ENCODE measurements at regions of chr7 and their contacts with region 1.

Region 1: DNA sequence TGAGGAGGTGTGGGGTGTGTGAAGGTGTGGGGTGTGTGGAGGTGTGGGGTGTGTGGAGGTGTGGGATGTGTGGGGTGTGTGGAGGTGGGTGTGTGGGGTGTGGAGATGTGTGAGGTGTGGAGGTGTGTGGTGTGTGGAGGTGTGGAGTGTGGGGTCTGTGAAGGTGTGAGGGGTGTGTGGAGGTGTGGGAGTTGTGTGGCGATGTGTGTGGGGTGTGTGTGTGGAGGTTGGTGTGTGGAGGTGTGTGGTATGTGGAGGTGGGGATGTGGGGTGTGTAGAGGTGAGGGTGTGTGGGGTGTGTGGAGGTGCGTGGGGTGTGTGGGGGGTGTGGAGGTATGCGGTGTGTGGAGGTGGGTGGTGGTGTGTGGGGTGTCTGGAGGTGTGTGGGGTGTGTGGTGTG is 34.8 kb downstream of the SPDYE17 start:
- DNase-seq: peak in 1 of 14 experiments; percentile 3
- ATAC-seq: no peak
- H3K4me3 ChIP-seq: no peak overlapping the region
- H3K4me3 Mint-ChIP-seq: no peak overlapping the region
- H3K27ac ChIP-seq: peak overlapping the region in 1 of 2 donors; percentile 26
- H3K27ac Mint-ChIP-seq: no peak overlapping the region
- H3K4me1 ChIP-seq: peaks cover 19% of the 10 kb centered on the region
- H3K4me1 Mint-ChIP-seq: no peaks in the 10 kb centered on the region
- H3K27me3 ChIP-seq: no peaks in the 10 kb centered on the region
- H3K27me3 Mint-ChIP-seq: no peaks in the 10 kb centered on the region
- CTCF ChIP-seq: no peak

Region 2: DNA sequence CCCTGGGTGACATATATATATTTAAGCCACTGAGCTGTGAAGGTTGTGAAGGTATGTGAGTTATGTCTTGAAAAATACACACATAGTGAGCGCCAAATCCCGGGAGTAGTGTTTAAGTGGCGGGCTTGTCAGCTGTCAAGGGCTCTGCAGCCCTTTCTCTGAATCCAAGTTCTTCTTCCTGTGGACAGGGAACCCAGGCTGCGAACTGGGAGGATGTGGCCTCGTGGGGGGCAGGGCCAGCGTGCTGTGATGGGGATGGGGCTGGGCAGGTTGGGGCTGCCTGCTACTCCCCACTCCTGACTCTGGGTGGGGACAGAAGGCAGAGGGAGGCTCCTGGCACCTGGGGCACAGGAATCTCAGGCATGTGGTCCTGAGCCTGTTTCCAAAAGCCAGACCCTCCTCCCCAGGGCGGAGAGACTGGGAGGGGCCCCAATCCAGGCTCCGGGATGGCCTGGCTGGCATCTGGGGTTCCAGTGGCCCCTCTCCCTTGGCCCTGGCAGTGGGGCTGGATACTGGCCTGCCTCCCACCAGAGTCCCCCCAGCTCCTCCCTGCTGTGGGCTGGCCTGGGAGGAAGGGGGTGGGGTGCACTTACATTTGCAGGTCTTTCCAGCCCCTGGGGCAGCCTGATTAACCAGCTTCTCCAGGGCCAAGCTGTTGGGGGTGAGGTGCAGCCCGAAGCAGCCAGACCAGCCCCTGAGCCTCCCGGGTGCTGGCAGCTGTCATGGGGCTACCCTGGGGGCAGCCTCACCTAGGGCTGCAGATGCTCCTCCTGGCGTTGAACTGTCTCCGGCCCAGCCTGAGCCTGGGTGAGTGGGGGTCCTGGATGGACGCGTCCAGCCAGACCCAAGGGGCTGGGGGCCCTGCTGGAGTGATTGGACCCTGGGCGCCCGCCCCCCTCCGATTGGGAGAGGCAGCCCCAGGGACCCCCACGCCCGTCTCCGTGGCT is 487.2 kb before region 1 on chr7 and contains the start of gene UPK3B:
- CTCF ChIA-PET with region 1: no interaction called
- POLR2A ChIA-PET with region 1: no interaction called
- intact Hi-C with region 1: loop called in 1 of 2 experiments (anchors 10 kb)
- DNase-seq: peak in 2 of 14 experiments; percentile 15 to 33
- ATAC-seq: no peak
- H3K4me3 ChIP-seq: no peak within 1 kb of the TSS
- H3K4me3 Mint-ChIP-seq: no peak within 1 kb of the TSS
- H3K27ac ChIP-seq: no peak within 1 kb of the TSS
- H3K27ac Mint-ChIP-seq: no peak within 1 kb of the TSS
- H3K4me1 ChIP-seq: peaks cover 4% of the 10 kb centered on the region
- H3K4me1 Mint-ChIP-seq: no peaks in the 10 kb centered on the region
- H3K27me3 ChIP-seq: no peaks in the 10 kb centered on the region
- H3K27me3 Mint-ChIP-seq: no peaks in the 10 kb centered on the region
- CTCF ChIP-seq: no peak
- total RNA-seq, gene UPK3B: 1.3 to 2.6 TPM

Region 3: DNA sequence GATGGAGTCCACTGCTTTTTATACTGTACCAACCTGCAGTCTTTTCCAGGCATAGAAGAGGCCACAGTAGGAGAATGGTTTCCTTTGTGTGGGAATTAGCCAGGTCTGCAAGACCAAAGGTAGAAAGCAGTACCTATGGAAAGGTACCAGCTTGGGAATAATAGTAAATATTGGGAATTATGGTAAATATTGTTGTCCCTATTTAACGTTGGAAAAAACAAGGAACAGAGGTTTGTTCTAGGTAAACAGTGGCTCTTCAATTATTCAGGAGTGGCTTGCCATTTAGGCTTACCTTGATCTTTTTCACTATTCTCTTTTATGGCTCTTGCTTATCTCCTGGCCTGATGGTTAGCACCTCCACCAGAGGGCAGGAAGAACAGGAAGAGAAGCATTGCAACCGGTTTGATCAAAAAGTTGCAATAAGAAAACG is 462.7 kb after region 1 on chr7:
- CTCF ChIA-PET with region 1: no interaction called
- POLR2A ChIA-PET with region 1: no interaction called
- intact Hi-C with region 1: no loop called
- DNase-seq: peak in 1 of 14 experiments; percentile 5
- ATAC-seq: no peak
- H3K4me3 ChIP-seq: no peak overlapping the region
- H3K4me3 Mint-ChIP-seq: no peak overlapping the region
- H3K27ac ChIP-seq: no peak overlapping the region
- H3K27ac Mint-ChIP-seq: no peak overlapping the region
- H3K4me1 ChIP-seq: no peaks in the 10 kb centered on the region
- H3K4me1 Mint-ChIP-seq: no peaks in the 10 kb centered on the region
- H3K27me3 ChIP-seq: no peaks in the 10 kb centered on the region
- H3K27me3 Mint-ChIP-seq: no peaks in the 10 kb centered on the region
- CTCF ChIP-seq: no peak